GM12878 (cell line): ENCODE measurements at regions of chr2 and their contacts with region 1.

Region 1: GRCh38 chr2:157492189-157492773 is 48.4 kb upstream of the CYTIP start:
- DNase-seq: peak; percentile 43
- ATAC-seq: peak; percentile 98
- H3K4me3 ChIP-seq: no peak overlapping the region
- H3K27ac ChIP-seq: no peak overlapping the region
- H3K4me1 ChIP-seq: no peaks in the 10 kb centered on the region
- H3K27me3 ChIP-seq: no peaks in the 10 kb centered on the region
- CTCF ChIP-seq: peak; percentile 79 to 93 (median 82); a peak in 5 of 6 replicates
- EP300 ChIP-seq: no peak
- POLR2A ChIP-seq: no peak
- RAD21 ChIP-seq: peak; percentile 89

Region 2: DNA sequence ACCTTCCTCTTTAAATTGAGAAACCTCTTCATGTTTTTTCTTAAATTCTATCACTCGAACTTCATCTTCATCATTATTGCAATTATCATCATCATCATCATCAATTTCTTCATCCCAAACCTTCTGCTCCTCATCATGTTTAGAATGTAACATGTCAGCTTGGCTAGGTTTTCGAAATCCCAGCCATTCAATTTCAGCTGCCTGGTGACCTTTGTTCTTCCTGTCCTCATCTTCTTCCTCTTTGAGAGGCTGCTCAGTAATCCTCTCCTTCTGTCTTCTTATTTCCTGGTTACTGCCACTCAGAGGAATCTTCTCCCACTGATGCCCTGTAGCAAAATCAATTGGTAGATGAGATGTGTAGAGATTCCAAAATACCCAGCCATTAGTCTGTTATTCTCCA is 170.8 kb before region 1 on chr2:
- CTCF ChIA-PET with region 1: interaction called, 165 read pairs
- POLR2A ChIA-PET with region 1: no interaction called
- RAD21 ChIA-PET with region 1: interaction called, 44 read pairs
- SMC1A ChIA-PET with region 1: interaction called, 165 read pairs
- in situ Hi-C with region 1: loop called (anchors 5 kb)
- intact Hi-C with region 1: loop called (anchors 2 kb)
- DNase-seq: no peak
- ATAC-seq: no peak
- H3K4me3 ChIP-seq: no peak overlapping the region
- H3K27ac ChIP-seq: no peak overlapping the region
- H3K4me1 ChIP-seq: no peaks in the 10 kb centered on the region
- H3K27me3 ChIP-seq: no peaks in the 10 kb centered on the region
- CTCF ChIP-seq: no peak
- EP300 ChIP-seq: no peak
- POLR2A ChIP-seq: no peak
- RAD21 ChIP-seq: no peak

Region 3: DNA sequence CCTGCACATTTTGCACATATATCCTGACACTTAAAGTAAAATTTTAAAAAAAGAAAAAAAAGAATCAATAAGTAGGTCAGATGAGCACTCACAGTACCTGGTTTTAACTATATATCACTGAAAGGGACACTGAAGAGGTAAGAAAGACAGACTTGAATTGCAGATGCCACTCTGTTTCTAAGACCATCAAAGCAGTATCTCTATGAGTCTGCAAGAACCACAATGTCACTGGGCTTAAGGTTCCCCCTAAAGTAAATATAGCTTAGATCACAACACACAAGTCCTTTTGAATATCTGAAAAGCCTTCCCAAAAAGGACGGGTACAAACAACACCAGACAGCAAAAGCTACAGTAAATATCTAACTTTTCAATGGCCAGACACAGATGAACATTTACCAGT is 106.0 kb before region 1 on chr2:
- CTCF ChIA-PET with region 1: no interaction called
- POLR2A ChIA-PET with region 1: no interaction called
- RAD21 ChIA-PET with region 1: no interaction called
- SMC1A ChIA-PET with region 1: no interaction called
- in situ Hi-C with region 1: no loop called
- intact Hi-C with region 1: no loop called
- DNase-seq: no peak
- ATAC-seq: peak; percentile 59
- H3K4me3 ChIP-seq: no peak overlapping the region
- H3K27ac ChIP-seq: no peak overlapping the region
- H3K4me1 ChIP-seq: no peaks in the 10 kb centered on the region
- H3K27me3 ChIP-seq: no peaks in the 10 kb centered on the region
- CTCF ChIP-seq: no peak
- EP300 ChIP-seq: no peak
- POLR2A ChIP-seq: no peak
- RAD21 ChIP-seq: no peak

Region 4: DNA sequence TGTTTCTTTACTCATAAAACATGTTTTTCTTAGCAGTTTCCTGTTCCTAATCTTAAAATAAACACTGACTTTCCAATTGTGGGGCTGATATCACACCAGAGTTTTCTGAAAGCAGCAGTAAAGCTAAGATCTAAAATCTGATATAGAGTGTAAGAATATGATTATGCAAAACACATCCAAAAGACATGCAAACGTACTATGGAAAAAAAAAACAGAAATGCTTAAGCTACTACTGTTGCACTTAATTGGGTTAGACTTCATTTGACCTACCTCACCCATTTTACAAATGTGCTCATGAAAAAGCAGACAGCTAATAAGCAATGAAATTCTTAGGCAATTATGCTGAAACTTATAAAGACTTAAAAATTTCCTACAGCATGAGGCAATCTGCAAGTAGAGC is 58.9 kb before region 1 on chr2:
- CTCF ChIA-PET with region 1: interaction called, 5 read pairs
- POLR2A ChIA-PET with region 1: interaction called, 6 read pairs
- RAD21 ChIA-PET with region 1: interaction called, 18 read pairs
- SMC1A ChIA-PET with region 1: interaction called, 18 read pairs
- in situ Hi-C with region 1: no loop called
- intact Hi-C with region 1: no loop called
- DNase-seq: no peak
- ATAC-seq: no peak
- H3K4me3 ChIP-seq: peak overlapping the region; percentile 35; the same call in 1 of the 2 replicates
- H3K27ac ChIP-seq: no peak overlapping the region
- H3K4me1 ChIP-seq: peaks cover 10% of the 10 kb centered on the region
- H3K27me3 ChIP-seq: no peaks in the 10 kb centered on the region
- CTCF ChIP-seq: no peak
- EP300 ChIP-seq: no peak
- POLR2A ChIP-seq: no peak
- RAD21 ChIP-seq: no peak

Region 5: GRCh38 chr2:157480182-157480961 is 11.9 kb before region 1 on chr2:
- CTCF ChIA-PET with region 1: interaction called, 29 read pairs
- POLR2A ChIA-PET with region 1: interaction called, 18 read pairs
- RAD21 ChIA-PET with region 1: interaction called, 19 read pairs
- SMC1A ChIA-PET with region 1: interaction called, 93 read pairs
- in situ Hi-C with region 1: no loop called
- intact Hi-C with region 1: no loop called
- DNase-seq: no peak
- ATAC-seq: peak; percentile 87
- H3K4me3 ChIP-seq: no peak overlapping the region
- H3K27ac ChIP-seq: peak overlapping the region; percentile 44
- H3K4me1 ChIP-seq: peaks cover 25% of the 10 kb centered on the region
- H3K27me3 ChIP-seq: no peaks in the 10 kb centered on the region
- CTCF ChIP-seq: no peak
- EP300 ChIP-seq: peak in 1 of 2 experiments; percentile 26; a peak in 1 of 4 replicates
- POLR2A ChIP-seq: peak; percentile 35; the same call in 1 of the 2 replicates
- RAD21 ChIP-seq: no peak

Region 6: DNA sequence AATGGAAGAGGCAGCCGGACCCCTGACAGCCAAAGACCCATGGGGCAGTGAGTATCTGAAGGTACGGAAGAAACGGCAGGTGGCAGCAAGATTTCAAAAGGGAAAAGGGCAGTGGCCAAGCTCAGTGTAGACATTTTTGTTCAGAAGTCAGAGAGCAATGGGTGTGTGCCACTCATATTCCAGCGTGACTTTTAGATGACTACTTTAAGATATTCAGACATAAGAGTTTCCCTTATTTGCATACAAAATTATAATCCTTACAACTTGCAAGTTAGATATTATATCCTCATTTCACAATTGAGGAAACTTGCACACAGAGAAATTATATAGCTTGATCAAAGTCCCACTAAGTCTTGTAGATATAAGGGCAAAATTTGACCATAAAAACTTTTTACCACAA is 12.3 kb after region 1 on chr2:
- CTCF ChIA-PET with region 1: interaction called, 10 read pairs
- POLR2A ChIA-PET with region 1: no interaction called
- RAD21 ChIA-PET with region 1: interaction called, 3 read pairs
- SMC1A ChIA-PET with region 1: interaction called, 4 read pairs
- in situ Hi-C with region 1: no loop called
- intact Hi-C with region 1: no loop called
- DNase-seq: no peak
- ATAC-seq: no peak
- H3K4me3 ChIP-seq: no peak overlapping the region
- H3K27ac ChIP-seq: no peak overlapping the region
- H3K4me1 ChIP-seq: no peaks in the 10 kb centered on the region
- H3K27me3 ChIP-seq: peaks cover 0 to 3% of the 10 kb centered on the region in 2 experiments; a peak in 1 of 4 replicates
- CTCF ChIP-seq: no peak
- EP300 ChIP-seq: no peak
- POLR2A ChIP-seq: no peak
- RAD21 ChIP-seq: no peak

Region 7: GRCh38 chr2:157751462-157752058 is 259.3 kb after region 1 on chr2:
- CTCF ChIA-PET with region 1: interaction called, 11 read pairs
- POLR2A ChIA-PET with region 1: no interaction called
- RAD21 ChIA-PET with region 1: no interaction called
- SMC1A ChIA-PET with region 1: interaction called, 15 read pairs
- in situ Hi-C with region 1: no loop called
- intact Hi-C with region 1: loop called (anchors 2 kb)
- DNase-seq: peak; percentile 36
- ATAC-seq: peak; percentile 79
- H3K4me3 ChIP-seq: no peak overlapping the region
- H3K27ac ChIP-seq: no peak overlapping the region
- H3K4me1 ChIP-seq: no peaks in the 10 kb centered on the region; the same call in 1 of the 2 replicates
- H3K27me3 ChIP-seq: no peaks in the 10 kb centered on the region
- CTCF ChIP-seq: peak; percentile 27 to 40 (median 38); a peak in 5 of 6 replicates
- EP300 ChIP-seq: no peak
- POLR2A ChIP-seq: no peak
- RAD21 ChIP-seq: peak; percentile 35; the same call in 1 of the 2 replicates

Region 8: GRCh38 chr2:157769856-157770255 is 277.6 kb after region 1 on chr2:
- CTCF ChIA-PET with region 1: no interaction called
- POLR2A ChIA-PET with region 1: no interaction called
- RAD21 ChIA-PET with region 1: no interaction called
- SMC1A ChIA-PET with region 1: no interaction called
- in situ Hi-C with region 1: no loop called
- intact Hi-C with region 1: no loop called
- DNase-seq: no peak
- ATAC-seq: no peak
- H3K4me3 ChIP-seq: no peak overlapping the region
- H3K27ac ChIP-seq: no peak overlapping the region
- H3K4me1 ChIP-seq: no peaks in the 10 kb centered on the region
- H3K27me3 ChIP-seq: no peaks in the 10 kb centered on the region; a peak in 1 of 4 replicates
- CTCF ChIP-seq: no peak
- EP300 ChIP-seq: no peak
- POLR2A ChIP-seq: no peak
- RAD21 ChIP-seq: no peak

Region 9: GRCh38 chr2:158006961-158007719 is 514.9 kb after region 1 on chr2:
- CTCF ChIA-PET with region 1: interaction called, 3 read pairs
- POLR2A ChIA-PET with region 1: no interaction called
- RAD21 ChIA-PET with region 1: no interaction called
- SMC1A ChIA-PET with region 1: interaction called, 3 read pairs
- in situ Hi-C with region 1: loop called (anchors 5 kb)
- intact Hi-C with region 1: no loop called
- DNase-seq: no peak
- ATAC-seq: peak; percentile 72
- H3K4me3 ChIP-seq: no peak overlapping the region
- H3K27ac ChIP-seq: no peak overlapping the region
- H3K4me1 ChIP-seq: no peaks in the 10 kb centered on the region
- H3K27me3 ChIP-seq: peaks cover 0 to 3% of the 10 kb centered on the region in 2 experiments; a peak in 1 of 4 replicates
- CTCF ChIP-seq: 0 out of 6 replicates have a peak, but pooled peaks of 1 of the 3 experiments have one; percentile 12
- EP300 ChIP-seq: no peak
- POLR2A ChIP-seq: no peak
- RAD21 ChIP-seq: no peak